Gastrocnemius medialis (tissue), 4 donors: ENCODE measurements at regions of chr4 and their contacts with region 1.

Region 1: GRCh38 chr4:119212234-119212963 is at the start of gene USP53:
- DNase-seq: peak; percentile 99
- ATAC-seq: peak; percentile 85 to 88
- H3K4me3 ChIP-seq: peak within 1 kb of the TSS; percentile 79 to 96 (median 88)
- H3K27ac ChIP-seq: peak within 1 kb of the TSS; percentile 95 to 99 (median 98)
- H3K4me1 ChIP-seq: peaks cover 28% of the 10 kb centered on the region in 2 donors
- H3K27me3 ChIP-seq: no peaks in the 10 kb centered on the region
- CTCF ChIP-seq: peak in 2 of 5 experiments; percentile 18 to 51
- POLR2A ChIP-seq: peak; percentile 97 to 99
- total RNA-seq, gene USP53: 56.9 to 190 (median 98.5) TPM

Region 2: GRCh38 chr4:119103263-119103662 is 109.1 kb before region 1 on chr4:
- in situ Hi-C with region 1: no loop called
- intact Hi-C with region 1: loop called (anchors 5 kb)
- DNase-seq: peak in 1 of 2 donors; percentile 45
- ATAC-seq: peak; percentile 69 to 75
- H3K4me3 ChIP-seq: no peak overlapping the region
- H3K27ac ChIP-seq: peak overlapping the region; percentile 49 to 73 (median 69)
- H3K4me1 ChIP-seq: peaks cover 46 to 54% of the 10 kb centered on the region in 2 donors
- H3K27me3 ChIP-seq: no peaks in the 10 kb centered on the region
- CTCF ChIP-seq: no peak
- POLR2A ChIP-seq: no peak

Region 3: GRCh38 chr4:119261986-119262385 is 49.6 kb after region 1 on chr4:
- in situ Hi-C with region 1: no loop called
- intact Hi-C with region 1: no loop called
- DNase-seq: no peak
- ATAC-seq: no peak
- H3K4me3 ChIP-seq: no peak overlapping the region
- H3K27ac ChIP-seq: no peak overlapping the region
- H3K4me1 ChIP-seq: no peaks in the 10 kb centered on the region
- H3K27me3 ChIP-seq: no peaks in the 10 kb centered on the region
- CTCF ChIP-seq: no peak
- POLR2A ChIP-seq: no peak

Region 4: GRCh38 chr4:119300101-119300978 is 87.9 kb after region 1 on chr4:
- in situ Hi-C with region 1: no loop called
- intact Hi-C with region 1: loop called (anchors 1 kb)
- DNase-seq: peak; percentile 85 to 93
- ATAC-seq: peak; percentile 74 to 86
- H3K4me3 ChIP-seq: peak overlapping the region; percentile 69 to 87 (median 81)
- H3K27ac ChIP-seq: peak overlapping the region; percentile 78 to 94 (median 88)
- H3K4me1 ChIP-seq: peaks cover 25 to 33% of the 10 kb centered on the region in 2 donors
- H3K27me3 ChIP-seq: no peaks in the 10 kb centered on the region
- CTCF ChIP-seq: peak in 2 of 5 experiments; percentile 13 to 14
- POLR2A ChIP-seq: peak; percentile 74 to 75